Endothelial cell of umbilical vein (primary cell): ENCODE measurements at regions of chr21 and their contacts with region 1.

Region 1: GRCh38 chr21:32257962-32258785 is 20.7 kb downstream of the MIS18A start:
- DNase-seq: peak; percentile 80
- H3K4me3 ChIP-seq: no peak overlapping the region
- H3K27ac ChIP-seq: no peak overlapping the region
- H3K4me1 ChIP-seq: peaks cover 13% of the 10 kb centered on the region
- H3K27me3 ChIP-seq: peaks cover 0 to 1% of the 10 kb centered on the region in 2 experiments
- CTCF ChIP-seq: peak; percentile 68 to 82
- POLR2A ChIP-seq: no peak

Region 2: GRCh38 chr21:31786164-31786920 is 471.8 kb before region 1 on chr21:
- CTCF ChIA-PET with region 1: interaction called, 84 read pairs
- POLR2A ChIA-PET with region 1: no interaction called
- dilution Hi-C with region 1: no loop called
- intact Hi-C with region 1: loop called (anchors 1 kb)
- DNase-seq: no peak
- H3K4me3 ChIP-seq: no peak overlapping the region
- H3K27ac ChIP-seq: no peak overlapping the region
- H3K4me1 ChIP-seq: no peaks in the 10 kb centered on the region
- H3K27me3 ChIP-seq: no peaks in the 10 kb centered on the region
- CTCF ChIP-seq: no peak
- POLR2A ChIP-seq: no peak

Region 3: DNA sequence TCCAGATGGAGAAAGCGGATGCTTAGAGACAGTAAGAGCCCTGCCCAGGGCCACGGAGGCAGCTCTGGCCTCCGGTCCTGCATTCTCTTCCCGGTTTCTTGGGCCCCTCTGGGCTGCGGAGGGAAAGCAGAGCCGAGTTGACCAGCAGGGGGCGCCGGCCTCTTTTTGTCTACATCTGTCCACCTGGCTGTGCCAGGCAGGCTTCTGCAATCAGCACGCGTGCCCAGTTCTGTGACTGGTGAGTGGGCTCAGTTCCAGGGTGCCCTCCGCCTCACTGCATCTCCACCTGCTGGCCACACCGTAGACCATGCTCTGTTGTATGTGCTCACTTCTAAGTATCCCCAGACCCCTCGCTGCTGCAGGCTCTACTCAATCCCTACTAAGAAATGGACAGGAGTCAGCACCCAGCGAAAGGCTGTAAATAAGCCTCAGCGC is 392.1 kb before region 1 on chr21:
- CTCF ChIA-PET with region 1: interaction called, 208 read pairs
- POLR2A ChIA-PET with region 1: no interaction called
- dilution Hi-C with region 1: no loop called
- intact Hi-C with region 1: loop called (anchors 1 kb)
- DNase-seq: peak; percentile 72
- H3K4me3 ChIP-seq: no peak overlapping the region
- H3K27ac ChIP-seq: no peak overlapping the region
- H3K4me1 ChIP-seq: no peaks in the 10 kb centered on the region
- H3K27me3 ChIP-seq: peaks cover 7 to 15% of the 10 kb centered on the region in 2 experiments
- CTCF ChIP-seq: peak; percentile 81 to 95
- POLR2A ChIP-seq: no peak

Region 4: DNA sequence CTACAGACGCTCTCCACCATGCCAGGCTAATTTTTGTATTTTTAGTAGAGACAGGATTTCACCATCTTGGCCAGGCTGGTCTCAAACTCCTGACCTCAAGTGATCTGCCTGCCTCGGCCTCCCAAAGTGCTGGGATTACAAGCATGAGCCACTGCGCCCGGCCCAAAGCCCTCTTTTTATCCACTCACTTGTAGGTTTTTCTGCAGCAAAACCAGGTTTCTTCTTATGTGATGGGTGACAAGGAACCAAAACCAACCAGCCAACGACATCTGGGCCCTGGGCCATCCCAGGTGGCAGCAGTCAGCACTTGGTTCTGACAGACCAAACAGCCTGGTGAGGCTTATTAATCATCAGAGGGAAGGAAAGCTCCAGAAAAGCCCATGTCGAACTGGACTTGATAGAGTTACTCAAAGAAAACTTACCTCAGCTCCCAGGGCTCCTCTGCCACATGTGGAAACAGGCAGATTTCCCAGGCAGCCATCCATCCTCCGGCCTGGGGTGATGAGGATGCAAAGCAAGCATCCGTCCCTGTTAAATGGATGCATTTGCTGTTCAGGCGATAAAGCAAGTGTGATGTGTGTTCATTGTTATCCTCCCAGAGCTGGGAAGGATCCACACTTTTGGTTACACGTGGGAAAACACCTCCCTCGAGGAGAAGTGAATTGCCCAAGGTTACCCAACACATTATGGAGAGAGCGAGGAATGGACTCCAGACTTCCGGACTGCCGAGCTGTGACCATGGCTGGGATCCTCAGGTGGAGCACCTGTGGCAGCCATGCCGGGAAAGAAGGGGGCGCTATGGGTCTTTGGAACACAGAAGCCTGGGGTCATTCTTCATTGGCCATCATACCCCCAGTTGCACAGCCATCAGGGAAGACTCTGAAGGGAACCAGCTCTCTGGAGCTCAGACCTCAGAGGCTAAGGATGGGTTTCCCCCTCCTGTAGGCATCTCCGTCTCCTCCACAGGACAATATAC is 266.5 kb before region 1 on chr21:
- CTCF ChIA-PET with region 1: interaction called, 12 read pairs
- POLR2A ChIA-PET with region 1: no interaction called
- dilution Hi-C with region 1: no loop called
- intact Hi-C with region 1: loop called (anchors 10 kb)
- DNase-seq: no peak
- H3K4me3 ChIP-seq: no peak overlapping the region
- H3K27ac ChIP-seq: no peak overlapping the region
- H3K4me1 ChIP-seq: no peaks in the 10 kb centered on the region
- H3K27me3 ChIP-seq: no peaks in the 10 kb centered on the region
- CTCF ChIP-seq: no peak
- POLR2A ChIP-seq: no peak

Region 5: DNA sequence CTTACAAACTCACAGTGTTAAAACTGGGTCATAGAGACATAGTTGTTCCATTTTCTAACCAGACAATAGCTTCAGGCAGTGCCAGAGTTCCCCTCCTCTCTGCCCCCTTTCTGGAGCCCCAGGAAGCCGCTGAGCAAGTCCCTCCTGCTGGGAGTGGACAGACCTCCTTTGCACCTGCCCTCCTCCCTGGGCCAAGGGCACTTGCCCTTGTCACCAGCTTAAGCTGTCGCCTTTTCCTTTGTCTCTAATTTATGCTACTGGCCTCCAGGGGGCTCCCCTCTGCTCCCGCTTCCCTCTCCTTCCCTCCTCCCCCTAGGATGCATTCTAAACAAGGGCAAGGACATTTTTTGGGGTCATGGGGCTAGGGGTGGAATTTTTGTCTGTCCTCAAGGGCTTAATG is 161.8 kb before region 1 on chr21:
- CTCF ChIA-PET with region 1: interaction called, 129 read pairs
- POLR2A ChIA-PET with region 1: no interaction called
- dilution Hi-C with region 1: no loop called
- intact Hi-C with region 1: loop called (anchors 1 kb)
- DNase-seq: peak; percentile 17
- H3K4me3 ChIP-seq: no peak overlapping the region
- H3K27ac ChIP-seq: no peak overlapping the region
- H3K4me1 ChIP-seq: no peaks in the 10 kb centered on the region
- H3K27me3 ChIP-seq: no peaks in the 10 kb centered on the region
- CTCF ChIP-seq: peak; percentile 36 to 60
- POLR2A ChIP-seq: no peak

Region 6: GRCh38 chr21:32203877-32204480 is 54.2 kb before region 1 on chr21:
- CTCF ChIA-PET with region 1: interaction called, 12 read pairs
- POLR2A ChIA-PET with region 1: no interaction called
- dilution Hi-C with region 1: no loop called
- intact Hi-C with region 1: no loop called
- DNase-seq: peak; percentile 53
- H3K4me3 ChIP-seq: no peak overlapping the region
- H3K27ac ChIP-seq: peak overlapping the region; percentile 34
- H3K4me1 ChIP-seq: peaks cover 13% of the 10 kb centered on the region
- H3K27me3 ChIP-seq: no peaks in the 10 kb centered on the region
- CTCF ChIP-seq: no peak
- POLR2A ChIP-seq: no peak

Region 7: DNA sequence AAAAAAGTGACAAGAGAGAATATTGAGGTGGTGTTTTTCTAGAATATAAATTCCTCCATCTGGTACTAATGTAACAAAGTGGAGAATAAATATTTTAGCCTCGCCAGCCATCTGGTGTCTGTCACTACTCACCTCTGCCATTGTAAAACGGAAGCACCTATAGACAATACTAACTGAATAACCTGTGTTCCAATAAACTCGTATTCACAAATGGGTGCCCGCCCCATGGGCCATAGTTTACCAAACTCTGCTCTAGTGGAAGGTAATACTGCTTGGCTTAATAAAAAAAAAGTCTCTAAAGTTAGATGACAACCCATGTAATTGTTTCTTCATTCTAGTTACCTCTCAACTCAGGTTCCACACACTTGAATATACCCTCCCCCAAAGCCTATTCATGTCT is 12.6 kb after region 1 on chr21:
- CTCF ChIA-PET with region 1: interaction called, 12 read pairs
- POLR2A ChIA-PET with region 1: no interaction called
- dilution Hi-C with region 1: no loop called
- intact Hi-C with region 1: no loop called
- DNase-seq: no peak
- H3K4me3 ChIP-seq: no peak overlapping the region
- H3K27ac ChIP-seq: no peak overlapping the region
- H3K4me1 ChIP-seq: no peaks in the 10 kb centered on the region
- H3K27me3 ChIP-seq: no peaks in the 10 kb centered on the region
- CTCF ChIP-seq: no peak
- POLR2A ChIP-seq: no peak